Heart right ventricle (tissue), 16 donors: ENCODE measurements at regions of chr2 and their contacts with region 1.

Region 1: GRCh38 chr2:11729362-11730212 is 16.8 kb upstream of the LPIN1 start:
- DNase-seq: no peak
- ATAC-seq: no peak
- H3K4me3 ChIP-seq: no peak overlapping the region
- H3K27ac ChIP-seq: no peak overlapping the region
- H3K4me1 ChIP-seq: peaks cover 0 to 6% (median 0%) of the 10 kb centered on the region in 9 donors
- H3K27me3 ChIP-seq: peaks cover 0 to 36% (median 9%) of the 10 kb centered on the region in 7 donors
- CTCF ChIP-seq: no peak

Region 2: DNA sequence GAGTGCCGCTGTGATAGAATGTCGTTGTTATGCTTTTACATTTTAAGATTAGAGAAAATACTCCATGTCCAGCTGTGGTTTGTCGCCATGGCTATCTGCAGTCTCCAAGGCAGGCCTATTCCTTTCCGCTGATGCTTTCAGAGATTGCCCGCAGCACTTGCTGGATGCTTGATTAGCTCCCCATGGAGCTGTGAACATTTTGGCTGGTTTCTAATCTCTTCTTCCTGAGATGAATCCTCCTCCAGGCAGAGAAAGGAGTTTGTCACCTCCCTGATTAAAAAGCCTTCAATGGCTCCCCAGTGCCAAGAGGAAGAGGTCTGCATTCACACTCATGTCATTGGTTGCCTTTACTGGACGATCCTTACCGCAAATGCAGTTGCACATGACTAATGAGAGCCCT is 15.8 kb before region 1 on chr2:
- intact Hi-C with region 1: loop called in 1 of 10 experiments (anchors 1 kb)
- DNase-seq: no peak
- ATAC-seq: no peak
- H3K4me3 ChIP-seq: no peak overlapping the region
- H3K27ac ChIP-seq: no peak overlapping the region
- H3K4me1 ChIP-seq: peaks cover 0 to 34% (median 8%) of the 10 kb centered on the region in 9 donors
- H3K27me3 ChIP-seq: peaks cover 0 to 17% (median 0%) of the 10 kb centered on the region in 7 donors
- CTCF ChIP-seq: no peak